A549 (cell line): ENCODE measurements at regions of chr1 and their contacts with region 1.

Region 1: GRCh38 chr1:20786253-20787028 is 666 bp downstream of the HP1BP3 start:
- DNase-seq: peak; percentile 68 to 95
- ATAC-seq: peak; percentile 86 to 89
- H3K4me3 ChIP-seq: peak overlapping the region; percentile 74
- H3K27ac ChIP-seq: peak overlapping the region; percentile 91 to 100
- H3K4me1 ChIP-seq: peaks cover 31% of the 10 kb centered on the region
- CTCF ChIP-seq: no peak
- EP300 ChIP-seq: no peak
- POLR2A ChIP-seq: peak; percentile 68
- RAD21 ChIP-seq: no peak

Region 2: GRCh38 chr1:20705196-20705755 is 81.2 kb before region 1 on chr1:
- CTCF ChIA-PET with region 1: no interaction called
- POLR2A ChIA-PET with region 1: no interaction called
- DNase-seq: no peak
- ATAC-seq: no peak
- H3K4me3 ChIP-seq: no peak overlapping the region
- H3K27ac ChIP-seq: no peak overlapping the region
- H3K4me1 ChIP-seq: no peaks in the 10 kb centered on the region
- CTCF ChIP-seq: no peak
- EP300 ChIP-seq: no peak
- POLR2A ChIP-seq: no peak
- RAD21 ChIP-seq: no peak

Region 3: DNA sequence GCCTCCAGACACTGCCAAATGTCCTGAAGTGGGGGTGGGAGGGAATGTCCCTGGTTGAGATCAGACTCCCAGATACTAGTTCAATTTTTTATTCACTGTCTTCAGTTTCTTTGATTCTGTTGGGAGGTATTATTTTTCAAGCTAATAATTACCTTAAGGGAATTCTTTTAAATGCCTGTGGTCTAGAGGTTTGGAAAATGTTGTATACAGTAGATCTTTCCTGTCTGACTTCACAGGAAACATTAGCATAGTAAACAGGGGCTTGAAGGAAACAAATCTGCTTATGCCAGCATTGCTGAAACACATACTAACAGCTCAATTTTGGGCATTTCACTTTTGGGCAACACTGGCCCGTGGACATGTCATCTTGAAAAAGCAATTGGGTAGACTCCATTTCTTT is 85.0 kb after region 1 on chr1:
- CTCF ChIA-PET with region 1: no interaction called
- POLR2A ChIA-PET with region 1: interaction called, 11 read pairs
- DNase-seq: peak in 1 of 2 experiments; percentile 31
- ATAC-seq: no peak; a peak in 1 of 6 replicates
- H3K4me3 ChIP-seq: no peak overlapping the region
- H3K27ac ChIP-seq: peak overlapping the region in 1 of 2 experiments; percentile 42; a peak in 1 of 6 replicates
- H3K4me1 ChIP-seq: peaks cover 32% of the 10 kb centered on the region
- CTCF ChIP-seq: no peak
- EP300 ChIP-seq: no peak
- POLR2A ChIP-seq: no peak
- RAD21 ChIP-seq: no peak

Region 4: GRCh38 chr1:20896871-20897223 is 110.4 kb after region 1 on chr1:
- CTCF ChIA-PET with region 1: no interaction called
- POLR2A ChIA-PET with region 1: interaction called, 11 read pairs
- DNase-seq: peak; percentile 18 to 93
- ATAC-seq: peak; percentile 94
- H3K4me3 ChIP-seq: no peak overlapping the region
- H3K27ac ChIP-seq: peak overlapping the region; percentile 89 to 92
- H3K4me1 ChIP-seq: peaks cover 77% of the 10 kb centered on the region
- CTCF ChIP-seq: no peak
- EP300 ChIP-seq: peak; percentile 90 to 94
- POLR2A ChIP-seq: no peak
- RAD21 ChIP-seq: peak; percentile 25 to 50